ENCODE measurements at regions of chr4 and their contacts with region 1.

Region 1: GRCh38 chr4:78592104-78592783 is 40.7 kb downstream of the ANXA3 start:
- DNase-seq: no peak
- H3K4me3 ChIP-seq: no peak overlapping the region
- H3K4me3 Mint-ChIP-seq: no peak overlapping the region
- H3K27ac Mint-ChIP-seq: peak overlapping the region; percentile 21
- H3K4me1 ChIP-seq: peaks cover 18% of the 10 kb centered on the region
- H3K4me1 Mint-ChIP-seq: peaks cover 17% of the 10 kb centered on the region
- H3K27me3 ChIP-seq: no peaks in the 10 kb centered on the region
- H3K27me3 Mint-ChIP-seq: no peaks in the 10 kb centered on the region
- CTCF ChIP-seq: peak in 1 of 2 experiments; percentile 19

Region 2: GRCh38 chr4:78065508-78066192 is 526.6 kb before region 1 on chr4:
- CTCF ChIA-PET with region 1: no interaction called
- POLR2A ChIA-PET with region 1: no interaction called
- intact Hi-C with region 1: no loop called
- DNase-seq: peak in 1 of 2 experiments; percentile 19
- H3K4me3 ChIP-seq: no peak overlapping the region
- H3K4me3 Mint-ChIP-seq: no peak overlapping the region
- H3K27ac Mint-ChIP-seq: no peak overlapping the region
- H3K4me1 ChIP-seq: peaks cover 4% of the 10 kb centered on the region
- H3K4me1 Mint-ChIP-seq: peaks cover 17% of the 10 kb centered on the region
- H3K27me3 ChIP-seq: no peaks in the 10 kb centered on the region
- H3K27me3 Mint-ChIP-seq: no peaks in the 10 kb centered on the region
- CTCF ChIP-seq: no peak

Region 3: DNA sequence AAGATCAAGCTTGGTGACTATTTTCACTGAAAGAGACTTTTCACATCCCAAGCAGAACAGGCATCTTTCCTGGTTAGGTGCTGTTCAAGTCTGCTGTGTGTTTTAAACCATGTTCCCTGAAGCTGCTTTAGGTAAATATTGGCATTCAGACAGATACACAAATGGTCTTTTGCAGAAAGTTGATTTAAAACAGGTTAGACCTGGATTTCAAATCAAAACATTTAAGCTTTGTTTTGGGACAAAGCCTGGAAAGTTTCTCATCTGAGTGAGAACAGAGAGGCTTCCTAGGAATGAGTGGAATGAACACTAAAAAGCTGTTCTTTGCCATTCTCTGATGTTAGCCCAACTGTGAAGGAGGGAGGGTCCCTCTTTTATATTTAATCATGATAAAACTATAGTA is 30.6 kb before region 1 on chr4:
- CTCF ChIA-PET with region 1: no interaction called
- POLR2A ChIA-PET with region 1: interaction called, 10 read pairs
- intact Hi-C with region 1: no loop called
- DNase-seq: peak in 1 of 2 experiments; percentile 71
- H3K4me3 ChIP-seq: no peak overlapping the region
- H3K4me3 Mint-ChIP-seq: peak overlapping the region; percentile 67
- H3K27ac Mint-ChIP-seq: peak overlapping the region; percentile 72
- H3K4me1 ChIP-seq: peaks cover 98% of the 10 kb centered on the region
- H3K4me1 Mint-ChIP-seq: peaks cover 57% of the 10 kb centered on the region
- H3K27me3 ChIP-seq: no peaks in the 10 kb centered on the region
- H3K27me3 Mint-ChIP-seq: no peaks in the 10 kb centered on the region
- CTCF ChIP-seq: no peak

Region 4: DNA sequence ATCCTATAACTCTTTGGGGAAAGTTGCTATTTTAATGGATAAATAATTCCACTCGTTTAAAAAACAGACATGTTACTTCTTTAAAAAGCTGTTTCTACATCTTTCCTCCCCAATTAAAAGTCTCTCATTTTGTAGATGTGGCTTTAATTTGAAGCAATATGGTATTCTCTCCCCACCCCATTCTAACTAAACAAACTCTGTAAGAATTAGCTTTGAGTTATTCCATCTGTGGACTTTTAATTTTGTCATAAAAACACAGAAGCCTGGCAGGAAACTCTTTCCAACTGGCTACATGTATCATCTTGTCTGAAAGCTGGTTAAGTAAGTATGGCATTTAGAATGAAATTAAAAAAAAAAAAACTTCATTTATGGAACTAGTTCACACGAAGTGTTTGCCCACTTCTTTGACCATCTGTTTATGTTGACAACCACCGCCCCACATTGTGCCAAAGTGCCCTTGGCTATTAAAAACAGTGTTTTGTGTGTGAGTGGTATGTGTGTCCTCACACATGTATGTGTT is 593.3 kb after region 1 on chr4:
- CTCF ChIA-PET with region 1: no interaction called
- POLR2A ChIA-PET with region 1: no interaction called
- intact Hi-C with region 1: no loop called
- DNase-seq: no peak
- H3K4me3 ChIP-seq: no peak overlapping the region
- H3K4me3 Mint-ChIP-seq: no peak overlapping the region
- H3K27ac Mint-ChIP-seq: no peak overlapping the region
- H3K4me1 ChIP-seq: no peaks in the 10 kb centered on the region
- H3K4me1 Mint-ChIP-seq: no peaks in the 10 kb centered on the region
- H3K27me3 ChIP-seq: no peaks in the 10 kb centered on the region
- H3K27me3 Mint-ChIP-seq: peaks cover 2% of the 10 kb centered on the region
- CTCF ChIP-seq: no peak